Heart left ventricle (tissue), 16 donors: ENCODE measurements at regions of chr5 and their contacts with region 1.

Region 1: DNA sequence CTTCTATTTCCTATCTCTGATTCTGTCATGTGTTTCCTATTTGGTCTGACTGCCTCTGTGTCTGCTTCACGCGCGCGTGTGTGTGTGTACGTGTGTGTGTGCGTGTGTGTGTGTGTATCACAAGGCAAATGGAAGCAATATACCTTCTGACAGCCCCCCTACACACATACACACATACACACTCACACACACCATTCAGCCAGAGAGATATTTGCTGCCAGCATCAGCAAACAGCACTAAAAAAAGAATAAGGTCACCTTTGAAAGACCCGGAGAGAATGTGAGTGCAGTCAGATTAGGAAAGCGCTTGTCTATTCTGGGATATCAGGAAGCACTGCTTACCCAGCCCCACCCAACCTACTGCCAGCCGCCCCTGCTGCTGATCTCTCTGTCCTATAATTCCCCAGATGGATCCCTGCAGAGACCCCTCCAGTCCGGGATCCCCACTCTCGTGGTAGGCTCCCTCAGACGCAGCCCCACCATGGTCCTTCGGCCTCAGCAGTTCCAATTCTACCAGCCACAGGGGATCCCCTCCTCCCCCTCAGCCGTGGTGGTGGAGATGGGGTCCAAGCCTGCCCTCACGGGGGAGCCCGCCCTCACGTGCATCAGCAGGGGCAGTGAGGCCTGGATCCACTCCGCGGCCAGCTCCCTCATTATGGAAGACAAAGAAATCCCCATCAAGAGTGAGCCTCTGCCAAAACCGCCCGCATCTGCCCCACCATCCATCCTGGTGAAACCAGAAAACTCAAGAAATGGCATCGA is 45.7 kb downstream of the PLAC8L1 start:
- DNase-seq: peak; percentile 40 to 86 (median 62)
- ATAC-seq: peak; percentile 91 to 93 (median 92)
- H3K4me3 ChIP-seq: peak overlapping the region; percentile 19 to 62 (median 52)
- H3K27ac ChIP-seq: peak overlapping the region; percentile 63 to 97 (median 89)
- H3K4me1 ChIP-seq: peaks cover 0 to 28% (median 6%) of the 10 kb centered on the region in 12 donors
- H3K27me3 ChIP-seq: no peaks in the 10 kb centered on the region
- CTCF ChIP-seq: peak in 2 of 12 donors; percentile 21 to 28
- POLR2A ChIP-seq: no peak

Region 2: DNA sequence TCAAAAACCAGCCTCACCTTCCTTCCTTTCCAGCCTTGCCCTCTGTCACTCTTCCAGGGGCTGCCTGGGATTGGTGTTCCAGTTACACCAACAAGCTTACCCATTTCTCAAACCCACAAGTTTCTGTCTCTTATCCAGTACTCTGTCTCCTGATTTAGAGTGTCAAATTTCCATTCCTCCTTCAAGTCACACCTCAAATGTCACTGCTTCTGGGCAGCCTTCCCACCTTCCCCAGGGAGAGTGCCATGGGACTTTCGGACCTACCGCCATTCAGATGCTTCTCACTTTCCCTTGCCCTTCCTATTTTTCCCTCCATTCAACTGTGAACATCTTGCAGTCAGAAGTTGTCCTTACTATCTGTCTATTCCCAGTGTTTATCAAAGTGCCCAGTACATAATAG is 184.9 kb before region 1 on chr5:
- intact Hi-C with region 1: no loop called
- DNase-seq: peak in 1 of 5 donors; percentile 47
- ATAC-seq: peak in 2 of 4 donors; percentile 39 to 67
- H3K4me3 ChIP-seq: no peak overlapping the region
- H3K27ac ChIP-seq: no peak overlapping the region
- H3K4me1 ChIP-seq: no peaks in the 10 kb centered on the region
- H3K27me3 ChIP-seq: no peaks in the 10 kb centered on the region
- CTCF ChIP-seq: no peak
- POLR2A ChIP-seq: no peak

Region 3: DNA sequence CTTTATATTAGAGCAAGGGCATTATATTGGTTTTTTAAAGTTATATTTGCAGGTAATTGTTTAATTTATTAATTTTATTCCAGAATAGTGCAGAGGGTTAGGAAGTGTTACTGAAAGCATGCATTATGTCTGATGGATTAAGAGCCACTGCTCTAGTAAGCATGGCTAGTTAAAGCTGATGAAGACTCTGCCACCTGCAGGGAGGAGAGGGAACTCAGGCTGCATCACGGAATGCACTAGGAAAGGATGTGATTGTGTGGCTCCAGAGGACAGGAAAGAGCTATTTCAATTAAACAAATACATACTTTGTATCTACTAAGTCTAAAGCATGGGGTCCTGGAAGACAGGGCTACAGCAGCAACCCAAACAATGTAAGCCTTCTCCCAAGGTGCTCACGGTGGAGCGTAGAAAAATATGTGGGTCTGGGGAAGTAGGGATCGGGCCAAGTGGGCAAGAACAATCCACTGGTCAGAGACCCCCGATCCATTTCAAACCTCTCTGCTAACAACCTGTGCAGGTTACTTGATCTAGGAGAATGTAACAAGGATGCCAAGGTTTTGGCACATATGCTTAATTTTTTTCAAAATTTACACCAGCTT is 171.6 kb before region 1 on chr5:
- intact Hi-C with region 1: no loop called
- DNase-seq: no peak
- ATAC-seq: peak in 2 of 4 donors; percentile 70 to 73
- H3K4me3 ChIP-seq: no peak overlapping the region
- H3K27ac ChIP-seq: no peak overlapping the region
- H3K4me1 ChIP-seq: no peaks in the 10 kb centered on the region
- H3K27me3 ChIP-seq: peaks cover 0 to 5% (median 0%) of the 10 kb centered on the region in 9 donors
- CTCF ChIP-seq: peak; percentile 13 to 61 (median 46)
- POLR2A ChIP-seq: no peak

Region 4: GRCh38 chr5:146007270-146007669 is 52.4 kb before region 1 on chr5:
- intact Hi-C with region 1: no loop called
- DNase-seq: no peak
- ATAC-seq: peak in 1 of 4 donors; percentile 50
- H3K4me3 ChIP-seq: no peak overlapping the region
- H3K27ac ChIP-seq: no peak overlapping the region
- H3K4me1 ChIP-seq: no peaks in the 10 kb centered on the region
- H3K27me3 ChIP-seq: no peaks in the 10 kb centered on the region
- CTCF ChIP-seq: no peak
- POLR2A ChIP-seq: no peak

Region 5: DNA sequence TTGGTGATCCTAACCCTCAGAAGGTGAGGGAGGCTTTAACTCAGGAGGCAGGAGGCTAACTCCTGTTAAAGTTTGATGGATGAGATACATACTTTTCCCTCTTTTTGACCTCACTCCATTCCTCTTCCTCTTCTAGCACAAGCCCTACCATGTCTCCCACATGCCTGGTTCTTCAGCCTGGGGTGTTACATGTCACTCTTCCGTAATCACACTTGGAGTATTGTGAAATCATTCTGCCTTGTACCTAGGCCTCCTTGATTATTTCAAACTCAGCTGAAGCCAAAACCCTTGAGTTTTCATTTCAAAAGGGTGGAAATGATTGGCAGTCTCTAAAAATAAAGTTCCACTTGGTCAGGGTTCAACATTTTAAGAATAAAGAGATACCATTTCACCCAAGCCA is 44.0 kb after region 1 on chr5:
- intact Hi-C with region 1: loop called in 2 of 10 experiments (anchors 2 to 5 kb)
- DNase-seq: peak in 1 of 5 donors; percentile 40
- ATAC-seq: peak; percentile 82 to 96 (median 90)
- H3K4me3 ChIP-seq: no peak overlapping the region
- H3K27ac ChIP-seq: peak overlapping the region in 9 of 12 donors; percentile 20 to 74 (median 58)
- H3K4me1 ChIP-seq: peaks cover 0 to 14% (median 0%) of the 10 kb centered on the region in 12 donors
- H3K27me3 ChIP-seq: no peaks in the 10 kb centered on the region
- CTCF ChIP-seq: no peak
- POLR2A ChIP-seq: no peak

Region 6: DNA sequence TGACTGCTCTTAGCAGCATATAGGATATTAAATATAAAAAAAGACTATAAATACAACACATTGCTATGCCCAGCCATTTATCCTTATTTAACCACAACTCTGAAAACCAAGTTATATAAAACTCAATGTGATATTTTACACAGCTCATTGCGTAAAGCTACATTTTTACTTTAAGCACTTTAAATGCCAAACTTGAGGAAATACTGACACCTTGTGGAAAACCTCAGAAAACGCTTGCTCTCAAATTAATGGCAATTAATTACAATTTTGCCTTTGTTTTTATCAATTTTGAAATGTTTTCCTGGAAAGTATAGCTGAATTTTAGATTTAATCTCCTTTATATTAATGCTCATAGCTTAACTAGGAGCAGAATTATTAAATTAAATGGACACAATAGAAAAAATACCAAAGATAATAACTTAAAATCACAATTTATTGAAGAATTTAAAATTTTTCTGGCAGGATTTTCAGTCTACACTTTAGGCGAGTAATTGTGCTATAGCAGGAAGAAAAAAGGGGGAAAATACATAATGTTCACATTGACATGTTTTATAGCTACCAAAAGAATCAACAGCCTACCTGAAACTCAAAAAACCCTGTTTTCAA is 70.9 kb after region 1 on chr5:
- intact Hi-C with region 1: loop called in 2 of 10 experiments (anchors 2 to 10 kb)
- DNase-seq: no peak
- ATAC-seq: peak in 1 of 4 donors; percentile 20
- H3K4me3 ChIP-seq: no peak overlapping the region
- H3K27ac ChIP-seq: no peak overlapping the region
- H3K4me1 ChIP-seq: no peaks in the 10 kb centered on the region
- H3K27me3 ChIP-seq: no peaks in the 10 kb centered on the region
- CTCF ChIP-seq: peak; percentile 33 to 74 (median 58)
- POLR2A ChIP-seq: no peak